GM12878 (cell line): ENCODE measurements at regions of chr1 and their contacts with region 1.

Region 1: GRCh38 chr1:40703316-40703715 is 11.8 kb downstream of the NFYC start:
- DNase-seq: no peak
- ATAC-seq: no peak
- H3K4me3 ChIP-seq: no peak overlapping the region
- H3K27ac ChIP-seq: peak overlapping the region; percentile 71
- H3K4me1 ChIP-seq: peaks cover 46% of the 10 kb centered on the region
- H3K27me3 ChIP-seq: no peaks in the 10 kb centered on the region
- CTCF ChIP-seq: no peak
- EP300 ChIP-seq: no peak
- POLR2A ChIP-seq: no peak
- RAD21 ChIP-seq: no peak

Region 2: GRCh38 chr1:40684669-40685068 is 18.6 kb before region 1 on chr1:
- CTCF ChIA-PET with region 1: interaction called, 36 read pairs
- POLR2A ChIA-PET with region 1: no interaction called
- RAD21 ChIA-PET with region 1: interaction called, 89 read pairs
- SMC1A ChIA-PET with region 1: interaction called, 115 read pairs
- in situ Hi-C with region 1: no loop called
- intact Hi-C with region 1: no loop called
- DNase-seq: no peak
- ATAC-seq: no peak
- H3K4me3 ChIP-seq: no peak overlapping the region
- H3K27ac ChIP-seq: no peak overlapping the region
- H3K4me1 ChIP-seq: no peaks in the 10 kb centered on the region
- H3K27me3 ChIP-seq: no peaks in the 10 kb centered on the region
- CTCF ChIP-seq: no peak
- EP300 ChIP-seq: no peak
- POLR2A ChIP-seq: no peak
- RAD21 ChIP-seq: no peak

Region 3: DNA sequence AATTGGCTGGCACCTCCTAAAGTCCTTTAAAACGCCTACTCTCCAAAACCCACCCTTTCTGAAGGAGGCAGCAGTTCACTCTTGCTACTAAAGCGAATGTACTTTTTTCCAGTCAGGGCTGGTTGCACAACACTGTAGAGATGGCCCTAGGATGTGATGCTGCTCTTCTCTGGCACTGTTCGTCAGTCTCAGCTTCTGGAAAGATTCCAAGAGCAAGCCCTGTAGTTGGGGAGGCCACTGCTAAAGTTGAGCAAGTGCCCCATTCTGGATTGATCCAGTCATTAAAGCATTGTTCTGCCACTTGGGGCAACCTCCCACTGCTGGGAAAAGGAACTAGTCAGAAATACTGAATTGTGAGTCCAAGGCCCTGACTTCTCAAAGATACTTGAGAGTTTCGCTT is 51.8 kb after region 1 on chr1:
- CTCF ChIA-PET with region 1: interaction called, 4 read pairs
- POLR2A ChIA-PET with region 1: no interaction called
- RAD21 ChIA-PET with region 1: interaction called, 14 read pairs
- SMC1A ChIA-PET with region 1: interaction called, 9 read pairs
- in situ Hi-C with region 1: no loop called
- intact Hi-C with region 1: loop called (anchors 5 kb)
- DNase-seq: no peak
- ATAC-seq: no peak
- H3K4me3 ChIP-seq: no peak overlapping the region
- H3K27ac ChIP-seq: no peak overlapping the region
- H3K4me1 ChIP-seq: peaks cover 24% of the 10 kb centered on the region
- H3K27me3 ChIP-seq: no peaks in the 10 kb centered on the region
- CTCF ChIP-seq: no peak
- EP300 ChIP-seq: no peak
- POLR2A ChIP-seq: no peak
- RAD21 ChIP-seq: no peak